Motor neuron (in vitro differentiated cells): ENCODE measurements at regions of chr9 and their contacts with region 1.

Region 1: DNA sequence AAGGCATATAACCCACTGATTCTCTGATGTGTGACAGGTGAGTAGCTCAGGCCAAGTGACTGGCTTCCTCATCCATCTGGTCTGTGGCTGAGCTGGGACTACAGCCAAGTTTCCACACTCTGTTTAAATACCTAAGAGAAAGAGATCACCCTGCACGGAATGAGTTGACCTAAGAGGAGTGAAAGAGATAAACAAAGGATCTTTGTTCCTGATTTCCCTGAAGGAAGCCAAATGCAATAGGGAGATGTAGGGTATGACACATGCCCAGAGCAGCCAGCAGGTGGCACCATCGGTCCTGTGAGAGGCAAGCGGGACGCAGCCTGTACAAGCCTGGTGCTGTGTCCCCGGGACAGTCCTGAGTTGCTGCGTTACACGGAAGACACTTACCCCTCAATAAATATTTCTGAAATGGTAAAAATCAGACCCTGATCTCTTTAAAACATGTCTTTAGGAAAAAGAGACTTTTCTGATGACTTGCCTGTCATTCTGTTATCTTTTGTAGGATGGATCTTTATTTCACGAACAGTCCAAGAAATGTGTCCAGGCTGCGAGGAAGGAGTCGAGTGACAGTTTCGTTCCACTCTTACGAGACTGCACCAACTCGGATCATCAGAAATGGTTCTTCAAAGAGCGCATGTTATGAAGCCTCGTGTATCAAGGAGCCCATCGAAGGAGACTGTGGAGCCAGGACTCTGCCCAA is 41.1 kb downstream of the GALNT12 start:
- ATAC-seq: peak; percentile 73 to 100 (median 100)
- H3K4me3 ChIP-seq: no peak overlapping the region
- H3K27ac ChIP-seq: no peak overlapping the region
- H3K4me1 ChIP-seq: no peaks in the 10 kb centered on the region

Region 2: GRCh38 chr9:98929071-98929470 is 80.5 kb after region 1 on chr9:
- in situ Hi-C with region 1: no loop called
- ATAC-seq: peak in 3 of 8 experiments; percentile 63 to 82 (median 81)
- H3K4me3 ChIP-seq: no peak overlapping the region
- H3K27ac ChIP-seq: no peak overlapping the region
- H3K4me1 ChIP-seq: no peaks in the 10 kb centered on the region

Region 3: GRCh38 chr9:98974994-98975712 is 126.6 kb after region 1 on chr9:
- in situ Hi-C with region 1: loop called in 3 of 9 experiments (anchors 25 kb)
- ATAC-seq: peak; percentile 64 to 94 (median 79)
- H3K4me3 ChIP-seq: peak overlapping the region; percentile 13 to 29 (median 21)
- H3K27ac ChIP-seq: no peak overlapping the region
- H3K4me1 ChIP-seq: peaks cover 7 to 16% of the 10 kb centered on the region in 2 donors

Region 4: GRCh38 chr9:98998441-98999151 is 150.0 kb after region 1 on chr9:
- in situ Hi-C with region 1: loop called in 4 of 9 experiments (anchors 10 to 25 kb)
- ATAC-seq: peak; percentile 61 to 93 (median 79)
- H3K4me3 ChIP-seq: no peak overlapping the region
- H3K27ac ChIP-seq: no peak overlapping the region
- H3K4me1 ChIP-seq: no peaks in the 10 kb centered on the region

Region 5: DNA sequence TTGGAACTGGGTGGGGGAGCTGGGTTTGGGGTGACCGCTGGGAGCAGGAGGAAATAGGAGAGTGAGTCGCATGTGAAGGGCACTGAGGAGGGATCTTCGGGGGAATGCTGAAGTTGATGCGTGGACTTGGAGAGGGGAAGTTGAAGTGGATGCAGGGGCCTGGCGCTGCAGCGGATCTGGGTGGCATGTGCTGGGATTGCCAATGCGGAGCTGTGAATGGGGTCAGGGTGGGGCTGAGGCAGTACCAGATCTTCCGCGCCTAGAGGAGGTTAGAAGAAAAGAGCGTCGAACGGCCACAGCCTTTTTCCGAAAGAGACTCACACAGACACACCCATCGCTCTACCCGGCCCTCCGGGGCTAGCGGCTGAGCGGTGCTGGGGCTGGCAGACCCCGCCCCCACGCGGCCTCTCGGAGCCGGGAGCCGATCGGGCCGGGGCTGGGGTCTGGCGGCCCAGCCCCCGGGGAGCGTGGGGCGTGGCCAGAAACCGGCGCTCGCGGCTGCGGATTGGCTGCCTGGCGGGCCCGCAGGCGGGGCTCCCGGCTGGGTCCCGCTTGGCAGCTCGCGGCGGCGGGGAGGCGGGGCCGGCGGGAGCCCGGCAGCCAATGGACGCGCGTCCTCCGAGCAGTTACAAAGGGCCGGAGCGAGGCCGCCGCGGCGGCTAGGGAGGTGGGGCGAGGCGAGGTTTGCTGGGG is 256.0 kb after region 1 on chr9 and contains the start of gene TGFBR1:
- in situ Hi-C with region 1: loop called in 1 of 9 experiments (anchors 25 kb)
- ATAC-seq: peak; percentile 78 to 95 (median 92)
- H3K4me3 ChIP-seq: peak within 1 kb of the TSS; percentile 62 to 95 (median 77)
- H3K27ac ChIP-seq: peak within 1 kb of the TSS; percentile 90 to 93
- H3K4me1 ChIP-seq: peaks cover 9 to 20% of the 10 kb centered on the region in 2 donors
- total RNA-seq, gene TGFBR1: 15.7 to 71.7 (median 33.8) TPM

Region 6: DNA sequence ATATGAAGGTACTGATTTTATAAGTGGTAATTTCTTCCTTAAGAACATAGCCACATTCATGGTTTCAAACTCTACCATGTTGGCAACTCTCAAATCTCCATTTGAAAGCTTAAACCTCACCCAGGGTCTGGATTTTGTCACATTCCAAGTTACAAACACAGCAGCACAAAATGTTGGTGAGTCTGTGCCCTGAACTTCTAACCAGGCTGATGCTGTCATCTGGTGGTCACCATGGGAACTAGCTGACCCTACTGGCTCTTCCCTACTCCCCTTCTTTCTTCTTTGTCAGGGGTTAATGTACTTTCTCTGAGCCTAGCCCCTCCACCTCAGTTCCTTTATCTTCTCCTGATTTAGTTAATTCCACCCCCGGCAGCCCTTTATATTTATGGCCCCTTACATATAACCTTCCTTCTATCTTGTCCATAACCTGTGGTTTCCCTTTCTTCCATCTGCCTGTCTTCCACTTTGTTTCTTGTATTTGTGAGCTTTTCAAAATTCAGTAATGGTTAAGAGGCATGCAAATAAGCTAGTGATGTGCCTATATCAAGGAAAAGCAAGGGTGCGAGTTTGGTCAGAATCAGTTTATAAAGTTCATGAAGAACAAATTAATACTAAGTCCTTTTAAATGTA is 292.2 kb after region 1 on chr9:
- in situ Hi-C with region 1: loop called in 4 of 9 experiments (anchors 25 kb)
- ATAC-seq: peak in 5 of 8 experiments; percentile 40 to 91 (median 87)
- H3K4me3 ChIP-seq: no peak overlapping the region
- H3K27ac ChIP-seq: no peak overlapping the region
- H3K4me1 ChIP-seq: no peaks in the 10 kb centered on the region